ENCODE measurements at regions of chr12 and their contacts with region 1.

Region 1: DNA sequence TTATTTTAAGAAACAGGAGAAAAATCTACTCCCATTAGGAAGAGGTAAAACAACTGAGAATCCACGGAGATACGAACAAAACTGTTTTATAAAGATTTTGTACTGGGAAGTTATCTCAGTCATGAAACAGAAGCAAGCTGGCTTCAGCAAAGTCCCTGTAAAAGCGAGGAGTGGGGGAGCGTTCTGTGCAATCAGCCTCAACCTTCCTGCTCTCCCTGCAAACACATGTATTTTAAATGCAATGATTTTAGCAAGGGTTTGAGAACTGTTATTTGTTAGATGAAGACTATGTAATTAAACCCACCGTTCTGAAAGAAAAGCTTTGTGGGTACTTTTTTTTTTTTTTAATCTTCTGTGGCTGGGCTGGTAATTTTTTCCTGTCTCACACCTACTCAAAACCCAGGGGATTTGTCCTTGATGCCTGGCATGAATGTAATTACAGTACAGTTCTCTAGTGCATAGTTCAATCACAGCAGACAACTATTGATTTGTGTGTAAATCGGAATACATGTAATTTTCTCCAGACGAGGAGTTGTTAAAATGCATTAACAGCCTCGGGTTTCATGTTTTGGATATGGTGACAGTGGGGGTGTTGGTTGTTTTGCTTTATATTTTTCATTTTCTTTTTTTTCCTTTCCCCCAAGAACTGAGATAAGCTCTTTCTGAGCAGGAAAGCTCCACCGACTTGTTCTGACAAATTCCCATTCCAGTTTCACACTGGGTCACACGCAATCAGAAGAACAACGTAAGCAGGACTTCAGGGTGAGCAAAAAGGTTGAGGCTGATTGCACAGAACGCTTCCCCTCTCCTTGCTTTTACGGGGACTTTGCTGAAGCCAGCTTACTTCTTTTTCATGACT is 153.6 kb downstream of the PHLDA1 start:
- DNase-seq: no peak
- ATAC-seq: peak; percentile 55
- H3K4me3 ChIP-seq: 0 out of 4 replicates have a peak overlapping the region, but pooled peaks of 1 of the 2 experiments have one; percentile 23
- H3K27ac ChIP-seq: peak overlapping the region; percentile 99
- H3K4me1 ChIP-seq: peaks cover 42 to 64% of the 10 kb centered on the region in 2 experiments
- H3K27me3 ChIP-seq: no peaks in the 10 kb centered on the region
- CTCF ChIP-seq: no peak
- POLR2A ChIP-seq: no peak
- RAD21 ChIP-seq: no peak

Region 2: GRCh38 chr12:75862692-75863471 is 15.1 kb before region 1 on chr12:
- CTCF ChIA-PET with region 1: no interaction called
- POLR2A ChIA-PET with region 1: interaction called, 11 read pairs
- RAD21 ChIA-PET with region 1: no interaction called
- intact Hi-C with region 1: no loop called
- DNase-seq: peak; percentile 84
- ATAC-seq: peak; percentile 80
- H3K4me3 ChIP-seq: no peak overlapping the region
- H3K27ac ChIP-seq: peak overlapping the region; percentile 87
- H3K4me1 ChIP-seq: peaks cover 46 to 91% of the 10 kb centered on the region in 2 experiments
- H3K27me3 ChIP-seq: no peaks in the 10 kb centered on the region
- CTCF ChIP-seq: no peak
- POLR2A ChIP-seq: no peak
- RAD21 ChIP-seq: 0 out of 2 replicates have a peak, but pooled peaks have one; percentile 20

Measured in HCT116 (cell line).